ENCODE measurements at regions of chr7 and their contacts with region 1.

Region 1: GRCh38 chr7:138459413-138460175 is 465 bp upstream of the TRIM24 start:
- DNase-seq: peak; percentile 96
- ATAC-seq: peak; percentile 76
- H3K4me3 ChIP-seq: peak overlapping the region; percentile 61 to 82 (median 65)
- H3K27ac ChIP-seq: peak overlapping the region; percentile 76
- H3K4me1 ChIP-seq: peaks cover 44% of the 10 kb centered on the region
- H3K27me3 ChIP-seq: peaks cover 0 to 3% of the 10 kb centered on the region in 2 experiments; a peak in 1 of 5 replicates
- CTCF ChIP-seq: no peak
- EP300 ChIP-seq: no peak; a peak in 1 of 4 replicates
- POLR2A ChIP-seq: peak in 1 of 2 experiments; percentile 47; a peak in 2 of 4 replicates
- RAD21 ChIP-seq: no peak

Region 2: DNA sequence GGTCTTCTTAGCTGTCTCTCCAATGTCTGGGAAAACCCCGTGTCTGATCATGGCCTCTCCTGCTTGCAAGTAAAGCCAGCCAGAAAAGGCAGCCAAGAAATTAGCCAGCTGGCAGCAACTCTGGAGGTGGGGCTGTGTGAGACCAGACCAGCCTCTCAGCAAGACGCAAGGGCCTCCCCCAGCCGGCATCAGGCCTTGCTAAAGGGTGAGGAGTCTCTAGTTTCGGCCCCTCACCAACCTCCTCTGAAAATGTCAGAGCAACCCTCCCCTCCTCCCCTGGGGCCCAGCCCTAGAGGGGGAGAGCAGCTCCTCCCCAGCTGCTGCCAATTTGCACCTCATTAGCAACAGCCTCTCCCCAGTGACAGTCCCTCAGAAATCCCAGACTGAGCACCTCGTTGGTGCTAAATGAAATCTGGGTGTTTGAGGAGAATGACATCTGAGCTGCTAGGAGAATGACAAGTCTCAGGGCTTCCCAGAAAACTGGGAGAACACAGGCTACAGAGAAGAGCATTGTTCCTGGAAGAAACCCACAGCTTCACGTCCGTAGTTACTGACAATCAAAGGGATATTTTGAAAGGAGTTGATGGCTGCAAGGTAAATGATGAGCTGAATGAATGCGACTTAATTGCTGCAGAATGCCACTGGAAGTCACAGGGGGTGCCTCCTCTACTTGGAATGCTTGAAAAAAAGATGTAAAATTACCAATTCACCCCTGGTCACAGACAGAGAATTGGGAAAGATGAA is 638.7 kb before region 1 on chr7:
- CTCF ChIA-PET with region 1: no interaction called
- POLR2A ChIA-PET with region 1: no interaction called
- in situ Hi-C with region 1: no loop called
- intact Hi-C with region 1: no loop called
- DNase-seq: no peak
- ATAC-seq: peak; percentile 45
- H3K4me3 ChIP-seq: no peak overlapping the region
- H3K27ac ChIP-seq: no peak overlapping the region
- H3K4me1 ChIP-seq: peaks cover 7% of the 10 kb centered on the region
- H3K27me3 ChIP-seq: peaks cover 0 to 11% of the 10 kb centered on the region in 2 experiments; a peak in 1 of 5 replicates
- CTCF ChIP-seq: no peak
- EP300 ChIP-seq: no peak
- POLR2A ChIP-seq: no peak
- RAD21 ChIP-seq: no peak

Region 3: GRCh38 chr7:138002096-138002827 is 457.3 kb before region 1 on chr7:
- CTCF ChIA-PET with region 1: no interaction called
- POLR2A ChIA-PET with region 1: no interaction called
- in situ Hi-C with region 1: no loop called
- intact Hi-C with region 1: loop called (anchors 5 kb)
- DNase-seq: peak; percentile 99
- ATAC-seq: peak; percentile 94
- H3K4me3 ChIP-seq: peak overlapping the region; percentile 92 to 99 (median 98); a peak in 5 of 6 replicates
- H3K27ac ChIP-seq: peak overlapping the region; percentile 79
- H3K4me1 ChIP-seq: peaks cover 35% of the 10 kb centered on the region
- H3K27me3 ChIP-seq: no peaks in the 10 kb centered on the region; a peak in 1 of 5 replicates
- CTCF ChIP-seq: peak; percentile 73
- EP300 ChIP-seq: peak in 1 of 2 experiments; percentile 39; a peak in 2 of 4 replicates
- POLR2A ChIP-seq: no peak
- RAD21 ChIP-seq: peak; percentile 56; the same call in 1 of the 2 replicates

Region 4: GRCh38 chr7:138161600-138162081 is 298.0 kb before region 1 on chr7:
- CTCF ChIA-PET with region 1: no interaction called
- POLR2A ChIA-PET with region 1: interaction called, 3 read pairs
- in situ Hi-C with region 1: loop called (anchors 10 kb)
- intact Hi-C with region 1: loop called (anchors 2 kb)
- DNase-seq: peak; percentile 95
- ATAC-seq: peak; percentile 88
- H3K4me3 ChIP-seq: no peak overlapping the region; a peak in 1 of 6 replicates
- H3K27ac ChIP-seq: peak overlapping the region; percentile 21
- H3K4me1 ChIP-seq: peaks cover 59% of the 10 kb centered on the region
- H3K27me3 ChIP-seq: no peaks in the 10 kb centered on the region
- CTCF ChIP-seq: peak; percentile 94
- EP300 ChIP-seq: peak in 1 of 2 experiments; percentile 55; a peak in 2 of 4 replicates
- POLR2A ChIP-seq: no peak
- RAD21 ChIP-seq: peak; percentile 92

Region 5: GRCh38 chr7:138295049-138295637 is 164.5 kb before region 1 on chr7:
- CTCF ChIA-PET with region 1: no interaction called
- POLR2A ChIA-PET with region 1: no interaction called
- in situ Hi-C with region 1: no loop called
- intact Hi-C with region 1: no loop called
- DNase-seq: no peak
- ATAC-seq: no peak
- H3K4me3 ChIP-seq: no peak overlapping the region
- H3K27ac ChIP-seq: no peak overlapping the region
- H3K4me1 ChIP-seq: peaks cover 36% of the 10 kb centered on the region
- H3K27me3 ChIP-seq: no peaks in the 10 kb centered on the region
- CTCF ChIP-seq: no peak
- EP300 ChIP-seq: no peak
- POLR2A ChIP-seq: no peak
- RAD21 ChIP-seq: no peak

Region 6: GRCh38 chr7:138316421-138317043 is 143.1 kb before region 1 on chr7:
- CTCF ChIA-PET with region 1: no interaction called
- POLR2A ChIA-PET with region 1: interaction called, 4 read pairs
- in situ Hi-C with region 1: no loop called
- intact Hi-C with region 1: loop called (anchors 2 kb)
- DNase-seq: peak; percentile 99
- ATAC-seq: peak; percentile 97
- H3K4me3 ChIP-seq: peak overlapping the region in 2 of 3 experiments; percentile 4 to 36; a peak in 2 of 6 replicates
- H3K27ac ChIP-seq: peak overlapping the region; percentile 93
- H3K4me1 ChIP-seq: peaks cover 41% of the 10 kb centered on the region
- H3K27me3 ChIP-seq: no peaks in the 10 kb centered on the region
- CTCF ChIP-seq: no peak
- EP300 ChIP-seq: peak; percentile 64 to 98
- POLR2A ChIP-seq: peak; percentile 49 to 89
- RAD21 ChIP-seq: no peak

Region 7: DNA sequence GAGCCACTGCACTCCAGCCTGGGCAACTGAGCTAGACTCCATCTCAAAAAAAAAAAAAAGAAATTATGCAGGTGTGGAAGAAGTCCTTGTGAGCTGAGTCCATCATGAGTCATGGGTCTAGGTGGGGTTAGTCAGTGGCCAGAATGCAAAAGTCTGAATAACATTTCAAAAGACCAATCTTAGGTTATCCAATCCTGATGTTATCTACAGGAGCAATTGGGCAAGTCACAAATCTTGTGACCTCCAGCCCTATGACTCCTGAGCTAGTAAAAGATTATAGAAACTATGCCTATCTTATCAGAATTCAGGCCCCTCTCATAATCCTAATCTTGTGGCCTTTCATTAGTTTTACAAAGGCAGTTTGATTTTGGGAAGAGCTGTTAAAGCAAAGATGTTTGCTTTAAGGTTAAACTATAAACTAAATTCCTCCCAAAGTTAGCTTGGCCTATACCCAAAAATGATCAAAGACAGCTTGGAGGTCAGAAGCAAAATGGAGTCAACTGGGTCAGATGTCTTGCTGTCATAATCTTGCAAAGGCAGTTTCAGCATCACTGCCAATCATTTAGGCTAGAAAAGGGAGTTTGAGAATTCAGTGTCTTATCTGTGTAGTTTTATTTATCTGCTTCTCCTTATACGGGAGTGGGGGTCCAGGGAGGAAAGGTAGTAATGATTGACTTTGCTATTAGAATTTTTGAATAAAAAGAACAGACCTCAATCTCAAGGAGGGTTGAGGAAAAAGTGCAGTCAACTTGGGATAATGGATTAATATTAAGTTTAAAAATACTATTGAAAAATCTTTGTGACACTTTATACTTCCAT is 70.7 kb before region 1 on chr7:
- CTCF ChIA-PET with region 1: no interaction called
- POLR2A ChIA-PET with region 1: interaction called, 8 read pairs
- in situ Hi-C with region 1: no loop called
- intact Hi-C with region 1: loop called (anchors 1 kb)
- DNase-seq: peak; percentile 98
- ATAC-seq: peak; percentile 92
- H3K4me3 ChIP-seq: no peak overlapping the region
- H3K27ac ChIP-seq: peak overlapping the region; percentile 61
- H3K4me1 ChIP-seq: peaks cover 65% of the 10 kb centered on the region
- H3K27me3 ChIP-seq: no peaks in the 10 kb centered on the region
- CTCF ChIP-seq: no peak
- EP300 ChIP-seq: peak in 1 of 2 experiments; percentile 99; a peak in 2 of 4 replicates
- POLR2A ChIP-seq: no peak
- RAD21 ChIP-seq: no peak

Region 8: DNA sequence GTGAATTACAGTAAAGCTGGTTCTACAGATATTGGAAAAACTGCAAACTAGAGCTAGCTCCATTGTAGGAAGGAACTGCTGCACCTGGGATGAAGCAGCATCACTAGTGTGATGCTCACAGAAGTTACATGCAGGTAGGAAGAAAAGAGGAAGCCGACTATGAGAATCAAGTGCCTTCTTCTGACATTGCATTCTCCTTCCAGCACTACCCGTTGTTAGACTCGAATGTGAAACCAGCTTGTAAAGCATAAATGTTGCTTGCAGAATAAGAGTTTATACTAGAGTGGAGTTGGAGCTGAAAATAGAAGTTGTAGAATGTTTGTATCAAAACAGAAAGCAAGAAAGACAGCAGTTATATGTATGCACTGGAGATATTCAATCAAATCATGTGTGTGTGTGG is 50.4 kb after region 1 on chr7:
- CTCF ChIA-PET with region 1: no interaction called
- POLR2A ChIA-PET with region 1: no interaction called
- in situ Hi-C with region 1: no loop called
- intact Hi-C with region 1: no loop called
- DNase-seq: no peak
- ATAC-seq: no peak
- H3K4me3 ChIP-seq: no peak overlapping the region
- H3K27ac ChIP-seq: no peak overlapping the region
- H3K4me1 ChIP-seq: peaks cover 54% of the 10 kb centered on the region
- H3K27me3 ChIP-seq: no peaks in the 10 kb centered on the region
- CTCF ChIP-seq: no peak
- EP300 ChIP-seq: no peak
- POLR2A ChIP-seq: peak in 1 of 2 experiments; percentile 16; a peak in 1 of 4 replicates
- RAD21 ChIP-seq: no peak

Region 9: DNA sequence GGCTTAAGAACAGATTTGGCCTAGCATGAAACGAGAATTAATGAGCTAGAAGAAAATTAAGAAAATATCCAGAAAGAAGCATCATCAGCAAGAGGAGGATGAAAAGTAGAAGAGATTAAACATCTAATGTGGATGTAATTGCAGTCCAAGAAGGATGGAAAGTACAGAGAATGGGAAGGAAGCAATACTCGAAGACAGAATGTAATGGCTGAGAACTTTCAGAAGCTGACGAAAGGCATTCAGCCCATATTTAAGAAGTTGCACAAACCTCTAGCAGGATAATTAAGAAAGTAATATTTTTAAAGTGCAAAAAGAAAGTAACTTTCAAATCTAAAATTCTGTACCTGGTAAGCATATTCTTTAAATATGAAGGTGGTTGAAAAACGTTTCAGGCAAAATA is 61.1 kb after region 1 on chr7:
- CTCF ChIA-PET with region 1: no interaction called
- POLR2A ChIA-PET with region 1: no interaction called
- in situ Hi-C with region 1: no loop called
- intact Hi-C with region 1: loop called (anchors 5 kb)
- DNase-seq: no peak
- ATAC-seq: no peak
- H3K4me3 ChIP-seq: no peak overlapping the region
- H3K27ac ChIP-seq: peak overlapping the region; percentile 1
- H3K4me1 ChIP-seq: no peaks in the 10 kb centered on the region
- H3K27me3 ChIP-seq: no peaks in the 10 kb centered on the region
- CTCF ChIP-seq: no peak
- EP300 ChIP-seq: no peak
- POLR2A ChIP-seq: no peak
- RAD21 ChIP-seq: no peak

Measured in HepG2 (cell line).